BJ (cell line): ENCODE measurements at regions of chr6 and their contacts with region 1.

Region 1: GRCh38 chr6:99746261-99746895 is 139.7 kb downstream of the PRDM13 start:
- DNase-seq: peak; percentile 35
- H3K4me3 ChIP-seq: no peak overlapping the region
- H3K27me3 ChIP-seq: no peaks in the 10 kb centered on the region
- CTCF ChIP-seq: peak; percentile 79

Region 2: DNA sequence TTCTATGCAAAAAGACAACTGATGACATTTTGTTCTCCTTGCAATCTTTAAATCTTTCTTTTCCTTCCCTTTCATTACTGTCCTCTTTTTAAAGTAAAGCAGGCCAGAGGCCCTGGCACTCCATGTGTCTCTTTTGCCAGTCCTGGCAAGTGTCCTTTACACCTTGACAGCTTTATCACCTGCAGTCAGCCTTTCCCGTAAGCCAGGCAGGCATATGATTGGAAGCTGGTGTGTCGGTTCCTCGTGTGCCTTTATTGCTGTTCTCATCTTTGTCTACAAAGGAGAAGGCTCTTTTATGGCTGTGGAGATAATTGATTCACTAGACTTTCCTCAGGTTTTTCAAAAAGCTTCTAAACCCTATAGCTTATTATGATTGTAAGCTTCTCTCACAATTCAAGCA is 636.3 kb before region 1 on chr6:
- CTCF ChIA-PET with region 1: no interaction called
- POLR2A ChIA-PET with region 1: no interaction called
- DNase-seq: no peak
- H3K4me3 ChIP-seq: no peak overlapping the region
- H3K27me3 ChIP-seq: no peaks in the 10 kb centered on the region
- CTCF ChIP-seq: no peak

Region 3: DNA sequence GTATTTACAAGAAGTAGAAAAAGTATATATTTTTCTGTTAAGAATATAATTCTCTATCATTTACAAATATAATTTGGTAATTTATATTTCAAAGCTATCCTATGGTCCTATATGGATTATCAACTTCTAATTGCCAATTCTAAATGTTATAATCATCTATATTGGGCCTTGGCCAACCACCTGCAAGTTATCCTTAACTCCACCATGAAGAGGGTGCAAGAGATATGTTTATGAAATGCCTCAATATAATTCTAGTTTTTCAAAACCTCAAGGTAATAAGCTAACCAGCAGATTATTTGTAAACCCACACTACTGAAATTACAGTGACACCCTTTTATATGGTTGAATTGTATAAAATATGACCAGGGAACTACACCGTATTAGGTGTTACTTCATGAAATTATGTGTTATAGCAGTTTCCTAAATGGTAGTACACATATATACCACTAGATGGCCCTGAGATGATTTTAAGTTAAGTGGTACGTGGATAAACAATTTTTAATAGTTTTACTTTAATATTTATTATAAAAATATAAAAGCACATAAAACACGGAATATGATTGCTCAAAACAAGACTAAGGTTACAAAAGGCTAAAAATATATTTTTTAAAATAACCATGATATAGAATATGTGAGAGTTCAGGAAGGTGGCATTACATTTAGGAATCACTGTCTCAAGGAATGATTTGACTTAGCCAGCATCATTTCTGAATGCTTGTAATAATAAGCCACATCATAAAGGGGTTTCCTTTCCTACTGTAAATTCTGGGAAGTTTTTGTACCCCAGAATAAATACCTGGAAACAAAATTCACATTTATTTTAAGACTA is 311.5 kb before region 1 on chr6:
- CTCF ChIA-PET with region 1: interaction called, 17 read pairs
- POLR2A ChIA-PET with region 1: no interaction called
- DNase-seq: no peak
- H3K4me3 ChIP-seq: no peak overlapping the region
- H3K27me3 ChIP-seq: no peaks in the 10 kb centered on the region
- CTCF ChIP-seq: peak; percentile 62

Region 4: DNA sequence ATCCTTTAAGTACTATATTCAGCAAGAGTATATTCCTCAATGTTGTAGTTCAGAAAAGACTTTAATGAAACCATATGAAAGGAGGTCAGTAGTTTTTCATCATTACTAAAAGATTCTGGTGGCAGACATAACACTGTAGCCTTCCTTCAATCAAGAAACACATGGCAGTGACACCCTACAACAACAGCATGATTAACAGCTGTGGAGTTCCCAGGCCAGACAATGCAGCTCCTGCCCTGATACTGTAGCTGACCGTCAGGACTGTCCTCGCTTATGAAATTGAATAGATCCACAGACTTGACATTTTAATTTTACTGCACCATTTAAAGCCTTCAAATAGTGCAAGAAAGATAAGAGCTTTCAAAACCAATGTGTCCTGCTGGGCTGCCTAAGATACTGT is 274.7 kb before region 1 on chr6:
- CTCF ChIA-PET with region 1: interaction called, 16 read pairs
- POLR2A ChIA-PET with region 1: no interaction called
- DNase-seq: no peak
- H3K4me3 ChIP-seq: no peak overlapping the region
- H3K27me3 ChIP-seq: no peaks in the 10 kb centered on the region
- CTCF ChIP-seq: no peak

Region 5: DNA sequence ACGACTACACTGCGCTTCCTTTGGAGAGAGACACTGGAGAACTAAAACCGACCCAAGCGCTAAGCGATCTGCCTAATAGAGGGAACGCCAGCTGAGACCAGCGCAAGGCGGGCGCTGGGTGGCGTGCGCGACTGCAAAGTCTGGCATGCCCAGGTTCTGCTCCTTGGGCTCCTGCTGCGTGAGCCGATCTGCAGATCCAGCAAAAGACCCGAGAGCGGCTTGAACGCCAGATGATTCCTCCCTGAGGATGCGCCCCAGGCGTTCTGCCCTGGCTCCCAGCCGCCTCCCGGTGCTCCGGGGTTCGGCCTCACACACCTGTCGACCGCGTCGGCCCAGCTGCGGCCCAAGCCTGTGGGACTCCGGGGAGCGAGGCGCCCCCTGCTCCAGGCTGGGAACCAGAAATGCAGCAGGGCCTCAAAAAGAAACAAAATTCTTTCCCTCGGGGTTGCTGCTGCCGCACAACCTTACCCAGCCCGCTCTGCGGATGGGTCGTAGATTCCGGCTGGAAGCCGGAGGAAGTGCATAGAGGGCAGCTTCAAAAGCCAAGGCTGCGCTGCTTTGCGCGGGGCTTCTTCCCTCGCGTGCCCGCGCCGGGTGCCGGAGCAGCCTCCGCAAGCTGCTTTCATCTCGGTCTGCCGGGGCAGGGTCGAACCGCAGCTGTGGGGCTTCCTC is 157.6 kb before region 1 on chr6:
- CTCF ChIA-PET with region 1: interaction called, 29 read pairs
- POLR2A ChIA-PET with region 1: no interaction called
- DNase-seq: no peak
- H3K4me3 ChIP-seq: peak overlapping the region; percentile 45
- H3K27me3 ChIP-seq: peaks cover 34% of the 10 kb centered on the region
- CTCF ChIP-seq: peak; percentile 58

Region 6: DNA sequence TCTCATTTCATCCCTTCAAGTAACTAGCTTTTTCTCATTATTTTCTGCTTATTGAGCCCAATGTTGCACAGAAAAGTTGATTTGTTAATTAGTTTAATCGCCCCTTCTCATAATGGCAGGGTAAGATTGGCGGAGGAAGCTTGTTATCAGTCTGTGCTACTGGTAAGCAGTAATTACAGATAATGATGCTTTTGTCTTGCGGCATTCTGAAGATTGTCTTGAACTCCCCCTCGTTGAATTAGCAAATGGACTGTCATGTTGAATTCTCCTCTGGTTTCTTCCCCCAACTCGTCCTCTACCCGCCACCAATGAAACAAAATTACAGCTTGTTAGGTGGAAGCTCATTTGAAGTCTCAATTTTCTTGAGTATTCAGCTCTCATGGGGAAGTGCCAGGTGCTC is 100.4 kb before region 1 on chr6:
- CTCF ChIA-PET with region 1: no interaction called
- POLR2A ChIA-PET with region 1: no interaction called
- DNase-seq: no peak
- H3K4me3 ChIP-seq: no peak overlapping the region
- H3K27me3 ChIP-seq: no peaks in the 10 kb centered on the region
- CTCF ChIP-seq: no peak